Tibial artery (tissue), 4 donors: ENCODE measurements at regions of chr11 and their contacts with region 1.

Region 1: DNA sequence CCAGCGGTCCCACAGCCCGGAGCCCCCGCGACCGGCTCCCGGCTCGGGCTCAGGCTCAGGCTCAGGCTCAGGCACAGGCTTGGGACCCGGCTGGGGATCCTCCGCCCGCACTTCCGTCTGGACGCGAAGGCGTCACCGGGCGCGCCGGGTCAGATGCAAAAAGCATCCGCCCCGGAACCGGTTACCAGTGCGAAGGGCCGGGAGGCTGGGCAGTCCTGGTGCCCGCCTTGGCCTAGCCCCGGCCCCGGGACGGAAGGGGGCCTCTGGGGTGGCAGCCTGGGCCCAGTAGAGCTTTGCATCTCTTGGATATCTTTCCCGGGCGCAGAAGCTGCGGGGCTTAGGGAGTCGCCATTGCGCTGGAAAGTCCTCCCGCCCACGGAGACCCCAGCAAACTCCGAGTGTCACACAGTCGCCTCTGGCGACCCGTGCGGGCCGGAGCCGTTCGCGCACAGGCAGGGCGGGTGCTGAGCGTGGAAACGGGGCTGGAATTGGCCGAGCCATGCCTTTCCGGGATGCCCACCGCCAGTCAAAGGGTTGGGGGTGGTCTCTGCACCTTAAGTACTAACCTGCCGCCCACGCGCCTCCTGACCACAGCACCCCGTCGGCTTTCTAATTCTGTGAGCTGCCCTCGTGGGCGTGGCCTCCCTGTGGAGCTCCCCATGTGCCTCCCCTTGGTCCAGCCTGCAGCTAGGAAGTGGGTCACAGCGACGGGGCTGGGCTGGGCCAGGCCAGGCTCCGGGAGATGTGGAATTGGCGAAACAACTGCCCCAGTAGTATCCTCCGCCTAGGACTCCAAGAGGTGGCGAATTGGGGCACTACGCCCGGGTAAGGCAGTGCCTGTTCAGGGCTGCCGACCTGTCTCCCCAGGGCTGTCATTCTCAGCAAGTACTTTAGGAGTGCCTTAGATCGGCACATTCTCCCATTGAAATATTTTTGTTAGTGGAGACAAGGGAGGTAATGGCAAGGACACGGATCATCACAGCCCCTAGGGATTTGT is at the start of gene TMEM9B:
- DNase-seq: peak; percentile 94 to 95
- H3K4me3 ChIP-seq: peak within 1 kb of the TSS; percentile 77 to 82
- H3K27ac ChIP-seq: peak within 1 kb of the TSS; percentile 94 to 98
- H3K4me1 ChIP-seq: peaks cover 0 to 40% (median 15%) of the 10 kb centered on the region in 4 donors
- H3K27me3 ChIP-seq: no peaks in the 10 kb centered on the region
- CTCF ChIP-seq: no peak

Region 2: GRCh38 chr11:8688414-8689362 is 275.9 kb before region 1 on chr11:
- intact Hi-C with region 1: loop called (anchors 10 kb)
- DNase-seq: peak; percentile 90 to 97
- H3K4me3 ChIP-seq: peak overlapping the region; percentile 57 to 60
- H3K27ac ChIP-seq: peak overlapping the region; percentile 71 to 79
- H3K4me1 ChIP-seq: peaks cover 3 to 43% (median 24%) of the 10 kb centered on the region in 4 donors
- H3K27me3 ChIP-seq: no peaks in the 10 kb centered on the region
- CTCF ChIP-seq: peak in 1 of 2 experiments; percentile 21

Region 3: DNA sequence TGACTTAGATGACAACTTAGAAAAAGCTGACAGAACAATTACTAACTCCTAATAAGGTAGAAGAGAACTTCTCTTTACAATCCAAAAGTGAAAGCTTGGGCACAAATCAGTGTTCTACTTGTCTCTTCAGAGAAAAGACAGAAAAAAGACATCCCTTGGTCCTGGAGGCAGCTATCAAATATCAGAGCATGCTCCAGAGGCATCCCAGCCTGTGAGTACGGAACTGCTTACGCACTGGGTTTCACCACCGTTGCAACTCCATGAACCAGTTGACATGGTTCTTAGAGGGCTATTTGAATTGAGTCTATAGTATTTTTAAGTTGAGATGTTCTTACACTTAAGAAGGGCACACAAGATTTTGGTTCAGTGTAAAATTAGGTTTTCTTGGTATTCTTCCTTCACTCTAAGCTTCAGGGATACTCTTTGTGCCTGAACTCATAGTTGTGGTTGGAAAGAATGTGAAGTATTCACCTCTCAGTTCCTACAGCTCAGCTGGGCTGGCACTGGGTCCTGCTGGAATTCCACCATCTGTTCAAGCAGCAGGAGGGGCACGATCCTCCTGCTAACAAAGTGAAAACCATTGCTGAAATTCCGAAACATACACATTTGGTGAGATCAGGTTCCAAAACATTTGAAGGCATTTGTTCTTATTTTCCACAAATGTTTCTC is 47.3 kb before region 1 on chr11:
- intact Hi-C with region 1: loop called (anchors 5 kb)
- DNase-seq: no peak
- H3K4me3 ChIP-seq: peak overlapping the region; percentile 0 to 17
- H3K27ac ChIP-seq: peak overlapping the region; percentile 64 to 70
- H3K4me1 ChIP-seq: peaks cover 0 to 47% (median 34%) of the 10 kb centered on the region in 4 donors
- H3K27me3 ChIP-seq: no peaks in the 10 kb centered on the region
- CTCF ChIP-seq: no peak

Region 4: GRCh38 chr11:8948886-8949285 is 15.7 kb before region 1 on chr11:
- intact Hi-C with region 1: no loop called
- DNase-seq: no peak
- H3K4me3 ChIP-seq: no peak overlapping the region
- H3K27ac ChIP-seq: no peak overlapping the region
- H3K4me1 ChIP-seq: no peaks in the 10 kb centered on the region
- H3K27me3 ChIP-seq: no peaks in the 10 kb centered on the region
- CTCF ChIP-seq: no peak

Region 5: GRCh38 chr11:9003573-9004309 is 39.1 kb after region 1 on chr11 and contains the start of gene NRIP3:
- intact Hi-C with region 1: loop called (anchors 2 kb)
- DNase-seq: peak; percentile 55 to 86
- H3K4me3 ChIP-seq: peak within 1 kb of the TSS; percentile 52 to 62
- H3K27ac ChIP-seq: peak within 1 kb of the TSS; percentile 2 to 49
- H3K4me1 ChIP-seq: peaks cover 0 to 20% (median 18%) of the 10 kb centered on the region in 4 donors
- H3K27me3 ChIP-seq: no peaks in the 10 kb centered on the region
- CTCF ChIP-seq: no peak